ENCODE measurements at regions of chr16 and their contacts with region 1.

Region 1: GRCh38 chr16:74813109-74813641 is 38.6 kb upstream of the FA2H start:
- DNase-seq: peak; percentile 81
- ATAC-seq: peak; percentile 99
- H3K4me3 ChIP-seq: peak overlapping the region in 1 of 3 experiments; percentile 34; a peak in 1 of 6 replicates
- H3K27ac ChIP-seq: no peak overlapping the region
- H3K4me1 ChIP-seq: peaks cover 14% of the 10 kb centered on the region
- H3K27me3 ChIP-seq: peaks cover 4 to 22% of the 10 kb centered on the region in 2 experiments; a peak in 3 of 5 replicates
- CTCF ChIP-seq: peak; percentile 100
- EP300 ChIP-seq: no peak
- POLR2A ChIP-seq: no peak
- RAD21 ChIP-seq: peak; percentile 100

Region 2: DNA sequence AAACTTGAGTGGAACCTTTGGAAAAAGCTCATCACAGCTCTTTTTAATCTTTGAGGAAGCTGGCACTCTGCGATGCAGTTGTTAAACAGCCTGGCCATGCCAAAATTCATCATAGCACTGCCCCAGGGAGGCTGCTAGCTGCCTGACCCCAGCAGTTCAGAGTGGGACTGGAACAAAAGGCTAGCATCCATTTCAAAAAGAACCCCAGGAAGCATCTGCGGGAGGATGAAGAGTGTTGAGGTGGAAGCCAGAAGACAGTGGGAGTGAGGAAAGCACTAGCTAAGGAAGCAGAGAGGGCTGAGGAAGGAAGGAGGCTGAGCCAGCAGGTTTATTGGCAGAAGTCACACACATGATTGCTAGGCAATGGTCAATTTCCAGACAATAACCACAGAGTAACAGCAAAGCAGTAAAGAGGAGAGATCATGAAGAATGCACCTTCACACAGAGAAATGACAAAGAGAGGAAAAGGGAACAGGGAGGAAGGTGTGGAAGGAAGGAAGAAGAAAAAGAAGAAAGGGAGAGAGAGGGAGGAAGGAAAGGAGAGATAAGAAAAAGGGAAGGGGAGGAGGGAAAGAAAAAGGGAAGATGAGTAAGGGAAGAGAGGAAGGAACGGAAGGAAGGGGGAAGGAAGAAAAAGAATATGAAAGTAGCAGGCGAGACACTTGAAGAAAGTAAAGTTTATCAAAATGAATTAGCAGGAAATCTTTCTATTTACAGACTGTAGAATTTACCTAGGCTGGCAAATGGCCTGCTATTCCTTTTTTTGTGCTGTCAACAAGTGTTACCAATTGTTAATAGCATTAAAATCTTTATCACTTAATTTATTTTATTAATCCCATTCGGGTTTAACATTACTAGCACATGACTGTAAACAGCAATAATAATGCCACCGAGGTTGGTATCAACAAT is 786.5 kb before region 1 on chr16:
- CTCF ChIA-PET with region 1: no interaction called
- POLR2A ChIA-PET with region 1: no interaction called
- in situ Hi-C with region 1: no loop called
- intact Hi-C with region 1: no loop called
- DNase-seq: no peak
- ATAC-seq: no peak
- H3K4me3 ChIP-seq: no peak overlapping the region
- H3K27ac ChIP-seq: no peak overlapping the region
- H3K4me1 ChIP-seq: no peaks in the 10 kb centered on the region
- H3K27me3 ChIP-seq: peaks cover 0 to 32% of the 10 kb centered on the region in 2 experiments; a peak in 4 of 5 replicates
- CTCF ChIP-seq: no peak
- EP300 ChIP-seq: no peak
- POLR2A ChIP-seq: no peak
- RAD21 ChIP-seq: no peak

Region 3: DNA sequence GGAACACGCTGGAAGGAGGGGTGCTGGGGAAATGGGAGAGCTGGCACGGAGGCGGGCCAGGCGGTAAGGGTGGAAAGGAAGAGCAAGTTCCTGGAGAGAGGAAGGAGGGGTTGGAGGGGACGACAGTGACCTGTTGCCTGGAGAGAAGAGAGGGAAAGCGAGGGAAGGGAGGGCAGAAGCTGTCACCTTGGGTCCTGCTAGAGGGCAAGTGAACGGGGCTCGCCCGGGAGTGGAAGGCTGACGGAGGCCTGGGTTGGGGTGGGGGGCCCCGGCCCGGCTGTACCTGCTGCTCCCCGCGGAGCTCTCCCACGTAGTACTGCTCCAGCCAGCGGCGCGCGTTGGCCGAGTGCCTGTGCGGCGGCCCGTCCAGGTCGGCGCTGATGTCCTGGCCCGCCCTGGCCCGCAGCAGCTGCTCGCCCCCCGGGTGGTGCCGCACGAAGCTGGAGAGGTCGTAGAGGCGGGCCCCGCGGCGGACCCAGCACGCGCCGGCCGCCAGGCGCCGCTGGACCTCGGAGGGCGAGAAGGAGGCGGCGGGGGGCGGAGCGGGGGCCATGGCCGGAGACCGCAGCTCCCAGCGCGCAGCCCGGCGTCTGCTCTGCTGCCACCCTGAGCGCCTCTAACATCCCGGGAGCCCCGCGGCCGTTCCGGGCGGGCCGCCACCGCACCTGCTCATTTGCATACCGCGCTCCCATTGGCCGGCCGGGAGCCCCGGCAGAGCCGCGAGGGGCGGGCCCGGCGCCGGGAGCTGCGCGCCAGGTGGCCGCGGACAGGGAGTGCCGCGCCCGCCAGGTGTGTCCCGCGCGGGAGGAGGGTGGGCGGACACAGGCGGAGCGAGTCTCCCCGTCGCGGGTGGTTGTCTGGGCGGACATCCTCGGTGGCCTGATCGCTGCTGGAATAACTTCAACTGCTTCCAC is 38.7 kb before region 1 on chr16 and contains the start of gene FA2H:
- CTCF ChIA-PET with region 1: interaction called, 17 read pairs
- POLR2A ChIA-PET with region 1: no interaction called
- in situ Hi-C with region 1: no loop called
- intact Hi-C with region 1: loop called (anchors 1 kb)
- DNase-seq: peak; percentile 86
- ATAC-seq: peak; percentile 99
- H3K4me3 ChIP-seq: peak within 1 kb of the TSS; percentile 45 to 77 (median 56)
- H3K27ac ChIP-seq: no peak within 1 kb of the TSS
- H3K4me1 ChIP-seq: peaks cover 22% of the 10 kb centered on the region
- H3K27me3 ChIP-seq: peaks cover 3 to 58% of the 10 kb centered on the region in 2 experiments; a peak in 4 of 5 replicates
- CTCF ChIP-seq: peak; percentile 66; the same call in 1 of the 2 replicates
- EP300 ChIP-seq: no peak
- POLR2A ChIP-seq: no peak
- RAD21 ChIP-seq: peak; percentile 91
- total RNA-seq, gene FA2H: not detected in 2 replicates

Region 4: GRCh38 chr16:74852500-74852875 is 39.3 kb after region 1 on chr16:
- CTCF ChIA-PET with region 1: no interaction called
- POLR2A ChIA-PET with region 1: no interaction called
- in situ Hi-C with region 1: loop called (anchors 5 kb)
- intact Hi-C with region 1: no loop called
- DNase-seq: no peak
- ATAC-seq: no peak
- H3K4me3 ChIP-seq: no peak overlapping the region
- H3K27ac ChIP-seq: no peak overlapping the region
- H3K4me1 ChIP-seq: no peaks in the 10 kb centered on the region
- H3K27me3 ChIP-seq: peaks cover 0 to 19% of the 10 kb centered on the region in 2 experiments; a peak in 2 of 5 replicates
- CTCF ChIP-seq: no peak
- EP300 ChIP-seq: no peak
- POLR2A ChIP-seq: no peak
- RAD21 ChIP-seq: no peak

Region 5: DNA sequence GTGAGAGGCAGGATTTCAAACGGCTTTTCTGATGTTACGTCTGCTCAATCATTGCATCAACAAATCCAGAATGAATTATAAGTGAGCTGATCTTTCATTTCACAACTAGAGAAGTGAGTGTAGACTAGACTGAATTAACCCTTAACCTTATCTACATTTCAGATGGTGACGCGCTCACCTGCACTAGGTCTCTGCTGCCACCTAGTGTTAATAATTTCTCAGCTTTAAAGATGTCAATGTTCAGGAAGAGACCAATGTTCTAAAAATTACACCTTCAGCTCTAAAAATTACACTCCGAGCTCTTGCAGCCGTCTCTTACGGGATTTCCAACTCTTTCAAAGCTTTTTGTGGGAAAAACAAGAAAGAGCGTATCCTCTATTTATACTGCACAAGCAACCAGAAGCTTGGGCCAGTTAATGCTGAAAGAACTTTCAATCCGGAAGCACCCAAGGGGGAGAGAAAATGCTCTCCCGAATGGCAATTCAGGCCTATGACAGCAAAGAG is 49.6 kb after region 1 on chr16:
- CTCF ChIA-PET with region 1: interaction called, 36 read pairs
- POLR2A ChIA-PET with region 1: interaction called, 3 read pairs
- in situ Hi-C with region 1: no loop called
- intact Hi-C with region 1: loop called (anchors 1 kb)
- DNase-seq: peak; percentile 66
- ATAC-seq: peak; percentile 66
- H3K4me3 ChIP-seq: peak overlapping the region; percentile 13 to 40 (median 37); a peak in 3 of 6 replicates
- H3K27ac ChIP-seq: peak overlapping the region; percentile 3
- H3K4me1 ChIP-seq: peaks cover 33% of the 10 kb centered on the region
- H3K27me3 ChIP-seq: peaks cover 0 to 6% of the 10 kb centered on the region in 2 experiments; a peak in 4 of 5 replicates
- CTCF ChIP-seq: peak; percentile 90
- EP300 ChIP-seq: no peak
- POLR2A ChIP-seq: no peak
- RAD21 ChIP-seq: peak; percentile 81

Measured in HepG2 (cell line).